Heart right ventricle (tissue), 16 donors: ENCODE measurements at regions of chr22 and their contacts with region 1.

Region 1: DNA sequence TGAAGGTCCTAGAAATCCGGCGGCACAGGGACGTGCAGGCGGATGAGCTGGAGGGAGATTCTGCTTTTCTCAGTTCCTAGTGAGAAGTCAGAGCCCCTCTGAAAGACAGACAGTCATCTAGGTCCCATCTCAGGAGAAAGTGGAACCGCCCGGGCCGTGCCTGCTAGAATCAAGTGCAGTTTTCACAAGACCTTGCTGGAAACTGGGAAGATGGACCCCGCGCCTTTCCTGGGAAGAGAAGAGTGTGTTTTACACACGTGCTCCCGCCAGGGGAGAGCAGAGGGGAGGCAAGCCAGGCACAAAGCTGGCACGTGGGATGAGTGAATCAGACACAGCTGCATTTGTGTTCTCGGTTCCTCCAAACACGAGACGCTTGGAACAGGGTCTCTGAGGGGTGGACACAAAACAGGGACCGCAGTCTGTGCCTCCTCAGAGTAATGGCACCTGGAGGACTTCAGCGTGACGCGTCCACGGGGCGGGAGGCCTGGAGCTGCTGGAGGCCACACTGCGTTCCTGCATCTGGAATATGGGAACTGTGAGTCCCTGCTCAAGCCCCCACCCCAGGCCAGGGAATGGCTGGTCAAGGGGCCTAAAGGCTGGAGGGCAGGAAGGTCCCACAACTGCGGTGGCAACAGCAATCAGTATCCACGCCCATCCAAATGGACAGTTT is 218.3 kb downstream of the BRD1 start:
- DNase-seq: no peak
- ATAC-seq: no peak
- H3K4me3 ChIP-seq: no peak overlapping the region
- H3K27ac ChIP-seq: no peak overlapping the region
- H3K4me1 ChIP-seq: no peaks in the 10 kb centered on the region
- H3K27me3 ChIP-seq: no peaks in the 10 kb centered on the region
- CTCF ChIP-seq: no peak

Region 2: GRCh38 chr22:47837703-47838102 is 1771.6 kb before region 1 on chr22:
- intact Hi-C with region 1: loop called in 1 of 10 experiments (anchors 5 kb)
- DNase-seq: no peak
- ATAC-seq: no peak
- H3K4me3 ChIP-seq: no peak overlapping the region
- H3K27ac ChIP-seq: no peak overlapping the region
- H3K4me1 ChIP-seq: no peaks in the 10 kb centered on the region
- H3K27me3 ChIP-seq: peaks cover 0 to 50% (median 33%) of the 10 kb centered on the region in 7 donors
- CTCF ChIP-seq: peak in 1 of 9 donors; percentile 28

Region 3: DNA sequence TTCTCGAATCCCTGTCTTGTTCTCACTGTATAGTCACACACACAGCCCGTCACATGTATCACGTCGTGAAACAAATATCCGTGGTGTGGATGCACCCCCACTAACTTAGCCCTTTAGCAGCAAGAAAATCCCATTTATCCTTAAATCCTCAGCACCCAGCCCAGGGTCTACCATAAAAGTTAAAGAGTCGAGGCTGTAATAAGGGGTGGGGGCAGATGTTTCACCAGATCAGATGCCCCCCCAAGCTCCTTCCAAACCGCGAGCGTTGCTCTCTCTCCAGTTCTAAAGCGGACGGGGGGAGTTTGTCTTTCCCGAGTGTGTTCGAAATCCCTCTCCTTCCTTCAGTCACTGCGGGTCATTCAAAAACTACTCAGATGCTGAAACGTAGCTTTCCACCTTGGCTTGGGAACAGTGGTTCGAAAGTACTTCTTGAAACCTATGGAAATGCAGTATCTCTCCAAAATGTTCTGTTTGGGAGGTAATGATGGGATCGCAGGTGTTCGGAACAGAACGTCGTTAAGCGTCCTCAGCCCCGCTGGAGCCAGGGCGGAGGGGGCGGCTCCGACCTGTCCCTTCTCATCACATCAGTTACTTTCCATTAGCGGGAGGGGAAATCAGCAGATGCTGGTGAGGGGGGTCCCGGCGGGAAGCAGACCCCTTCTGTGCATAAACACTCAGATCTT is 62.1 kb after region 1 on chr22:
- intact Hi-C with region 1: no loop called
- DNase-seq: no peak
- ATAC-seq: no peak
- H3K4me3 ChIP-seq: peak overlapping the region in 7 of 10 donors; percentile 21 to 61 (median 47)
- H3K27ac ChIP-seq: peak overlapping the region in 1 of 10 donors; percentile 77
- H3K4me1 ChIP-seq: peaks cover 2 to 17% (median 10%) of the 10 kb centered on the region in 9 donors
- H3K27me3 ChIP-seq: peaks cover 12 to 62% (median 48%) of the 10 kb centered on the region in 7 donors
- CTCF ChIP-seq: no peak